Endothelial cell of umbilical vein (primary cell): ENCODE measurements at regions of chr18 and their contacts with region 1.

Region 1: GRCh38 chr18:65938592-65939372 is 188.0 kb downstream of the CDH7 start:
- DNase-seq: peak; percentile 58
- H3K4me3 ChIP-seq: no peak overlapping the region
- H3K27ac ChIP-seq: no peak overlapping the region
- H3K4me1 ChIP-seq: no peaks in the 10 kb centered on the region
- H3K27me3 ChIP-seq: no peaks in the 10 kb centered on the region
- CTCF ChIP-seq: peak; percentile 24 to 49
- POLR2A ChIP-seq: no peak

Region 2: DNA sequence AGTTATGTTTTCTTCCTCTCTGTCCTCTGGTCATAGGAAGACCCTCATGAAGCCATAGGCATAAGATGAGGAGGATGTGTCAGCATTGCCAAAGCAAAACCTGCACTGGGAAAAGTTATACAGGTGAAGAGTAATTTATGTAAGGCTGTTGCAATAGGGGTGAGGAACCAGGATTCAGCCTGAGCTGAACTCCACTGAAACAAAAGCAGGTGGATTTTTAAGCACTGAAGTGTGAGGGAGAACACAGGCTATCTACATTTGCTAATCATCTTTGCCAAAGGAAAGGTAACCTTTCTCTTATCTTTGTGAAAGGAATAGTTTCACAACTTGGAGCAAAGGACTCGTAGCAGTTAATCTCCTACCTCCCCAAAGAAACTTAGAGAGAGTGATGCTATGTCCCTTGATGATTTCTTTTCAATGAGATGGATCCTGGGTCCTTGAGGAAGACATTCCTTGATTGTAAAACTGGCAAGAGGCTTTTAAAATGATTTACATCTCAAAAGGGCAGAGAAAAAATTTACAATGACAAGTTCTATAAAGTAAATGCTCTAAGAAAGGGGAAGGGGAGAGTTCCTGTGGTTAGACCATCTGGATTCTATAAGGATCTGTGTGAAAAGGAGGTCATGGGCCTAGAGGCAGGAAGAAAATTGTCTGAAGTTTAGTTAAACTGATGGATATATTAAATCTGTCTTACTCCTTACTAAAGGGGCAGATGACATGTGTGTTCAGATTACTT is 573.4 kb before region 1 on chr18:
- CTCF ChIA-PET with region 1: no interaction called
- POLR2A ChIA-PET with region 1: no interaction called
- dilution Hi-C with region 1: no loop called
- intact Hi-C with region 1: no loop called
- DNase-seq: no peak
- H3K4me3 ChIP-seq: no peak overlapping the region
- H3K27ac ChIP-seq: no peak overlapping the region
- H3K4me1 ChIP-seq: no peaks in the 10 kb centered on the region
- H3K27me3 ChIP-seq: no peaks in the 10 kb centered on the region
- CTCF ChIP-seq: no peak
- POLR2A ChIP-seq: no peak

Region 3: GRCh38 chr18:65753520-65753919 is 185.3 kb before region 1 on chr18:
- CTCF ChIA-PET with region 1: no interaction called
- POLR2A ChIA-PET with region 1: no interaction called
- dilution Hi-C with region 1: no loop called
- intact Hi-C with region 1: no loop called
- DNase-seq: no peak
- H3K4me3 ChIP-seq: no peak overlapping the region
- H3K27ac ChIP-seq: no peak overlapping the region
- H3K4me1 ChIP-seq: no peaks in the 10 kb centered on the region
- H3K27me3 ChIP-seq: peaks cover 0 to 2% of the 10 kb centered on the region in 2 experiments
- CTCF ChIP-seq: no peak
- POLR2A ChIP-seq: no peak

Region 4: GRCh38 chr18:65955747-65956146 is 17.0 kb after region 1 on chr18:
- CTCF ChIA-PET with region 1: no interaction called
- POLR2A ChIA-PET with region 1: no interaction called
- dilution Hi-C with region 1: no loop called
- intact Hi-C with region 1: no loop called
- DNase-seq: no peak
- H3K4me3 ChIP-seq: no peak overlapping the region
- H3K27ac ChIP-seq: no peak overlapping the region
- H3K4me1 ChIP-seq: no peaks in the 10 kb centered on the region
- H3K27me3 ChIP-seq: no peaks in the 10 kb centered on the region
- CTCF ChIP-seq: no peak
- POLR2A ChIP-seq: no peak

Region 5: DNA sequence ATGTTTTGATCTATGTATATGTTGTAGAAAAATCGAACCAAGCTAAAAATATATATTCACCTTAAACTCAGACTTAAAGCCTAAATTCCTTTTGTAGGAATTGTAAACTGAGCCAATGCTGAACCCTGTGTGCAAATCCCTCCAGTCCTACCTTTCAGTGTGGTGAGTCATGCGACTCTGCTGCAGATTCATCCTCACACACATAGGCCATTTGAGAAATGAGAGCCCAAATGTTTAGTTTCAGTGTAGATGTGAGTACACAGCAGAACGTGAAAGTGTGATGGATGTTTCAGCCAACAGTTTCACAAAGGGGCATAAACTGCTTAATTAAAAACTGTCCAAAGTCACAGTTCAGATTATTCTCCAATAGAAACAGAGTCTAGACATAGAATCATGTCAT is 471.9 kb after region 1 on chr18:
- CTCF ChIA-PET with region 1: no interaction called
- POLR2A ChIA-PET with region 1: no interaction called
- dilution Hi-C with region 1: no loop called
- intact Hi-C with region 1: no loop called
- DNase-seq: no peak
- H3K4me3 ChIP-seq: no peak overlapping the region
- H3K27ac ChIP-seq: no peak overlapping the region
- H3K4me1 ChIP-seq: no peaks in the 10 kb centered on the region
- H3K27me3 ChIP-seq: no peaks in the 10 kb centered on the region
- CTCF ChIP-seq: no peak
- POLR2A ChIP-seq: no peak

Region 6: GRCh38 chr18:66872277-66872676 is 933.5 kb after region 1 on chr18:
- CTCF ChIA-PET with region 1: no interaction called
- POLR2A ChIA-PET with region 1: no interaction called
- dilution Hi-C with region 1: no loop called
- intact Hi-C with region 1: loop called (anchors 10 kb)
- DNase-seq: peak; percentile 51
- H3K4me3 ChIP-seq: no peak overlapping the region
- H3K27ac ChIP-seq: no peak overlapping the region
- H3K4me1 ChIP-seq: no peaks in the 10 kb centered on the region
- H3K27me3 ChIP-seq: no peaks in the 10 kb centered on the region
- CTCF ChIP-seq: peak in 1 of 2 donors; percentile 15
- POLR2A ChIP-seq: no peak

Region 7: DNA sequence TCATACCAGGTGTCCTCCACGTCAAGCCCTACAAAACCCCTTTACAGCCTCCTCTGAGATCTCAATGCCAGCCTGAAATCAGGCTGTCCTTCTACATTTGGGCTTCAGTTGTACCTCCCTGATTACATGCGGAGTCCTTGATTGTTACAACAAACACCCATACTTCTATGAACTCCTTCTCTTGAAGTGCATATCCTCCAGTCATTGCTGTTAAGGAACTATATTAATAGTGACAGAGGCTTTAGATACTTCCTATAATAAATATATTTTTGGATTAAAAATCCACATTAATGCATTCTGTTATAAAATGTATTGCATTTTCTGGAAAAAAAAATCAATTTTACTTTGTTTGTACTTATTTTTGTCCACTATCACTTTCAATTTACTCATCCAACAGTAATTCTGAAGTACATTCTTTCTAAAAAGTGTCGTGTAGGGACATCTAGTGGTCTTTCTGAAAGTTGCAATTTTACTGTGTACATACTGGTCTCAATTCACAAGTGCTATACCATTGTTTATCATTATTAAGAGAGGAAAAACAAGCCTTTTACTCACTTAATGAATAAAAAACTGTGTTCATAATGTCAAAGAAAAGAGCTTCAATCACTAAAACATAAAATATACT is 1261.3 kb after region 1 on chr18:
- CTCF ChIA-PET with region 1: no interaction called
- POLR2A ChIA-PET with region 1: no interaction called
- dilution Hi-C with region 1: no loop called
- intact Hi-C with region 1: loop called (anchors 2 kb)
- DNase-seq: peak; percentile 72
- H3K4me3 ChIP-seq: no peak overlapping the region
- H3K27ac ChIP-seq: no peak overlapping the region
- H3K4me1 ChIP-seq: no peaks in the 10 kb centered on the region
- H3K27me3 ChIP-seq: no peaks in the 10 kb centered on the region
- CTCF ChIP-seq: peak; percentile 32 to 34
- POLR2A ChIP-seq: no peak